Activated CD4-positive, alpha-beta T cell treated with anti-CD3 and anti-CD28 coated beads for 36 hours (primary cell): ENCODE measurements at regions of chr12 and their contacts with region 1.

Region 1: GRCh38 chr12:56117778-56118687 is at the start of gene ZC3H10:
- DNase-seq: peak; percentile 99
- ATAC-seq: peak; percentile 77
- H3K4me3 Mint-ChIP-seq: peak within 1 kb of the TSS; percentile 97
- H3K27ac Mint-ChIP-seq: peak within 1 kb of the TSS; percentile 100
- H3K4me1 Mint-ChIP-seq: peaks cover 24% of the 10 kb centered on the region
- H3K27me3 Mint-ChIP-seq: no peaks in the 10 kb centered on the region
- total RNA-seq, gene ZC3H10: 6.4 to 6.5 TPM

Region 2: DNA sequence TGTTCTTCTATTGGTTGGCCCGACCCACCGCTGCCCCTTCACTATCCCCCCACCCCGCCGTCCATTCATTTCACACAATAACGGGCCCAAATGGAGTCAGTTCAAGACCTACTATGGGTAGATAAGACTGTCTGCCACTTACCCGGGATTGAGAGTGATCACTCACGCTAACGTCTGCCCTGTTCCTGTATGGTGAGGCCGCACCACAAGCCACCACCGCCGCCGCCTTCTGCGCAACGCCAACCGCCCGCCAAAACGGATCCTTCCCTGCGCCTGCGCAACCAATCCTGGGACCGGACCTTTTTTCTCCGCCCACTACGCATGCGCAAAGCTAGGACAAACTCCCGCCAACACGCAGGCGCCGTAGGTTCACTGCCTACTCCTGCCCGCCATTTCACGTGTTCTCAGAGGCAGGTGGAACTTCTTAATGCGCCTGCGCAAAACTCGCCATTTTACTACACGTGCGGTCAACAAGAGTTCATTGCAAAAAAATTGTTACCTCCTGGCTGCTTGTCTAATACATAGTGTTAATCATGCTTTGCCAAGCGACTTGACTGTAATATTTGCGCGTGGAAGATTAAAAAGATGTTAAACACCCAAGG is 1838.1 kb before region 1 on chr12 and contains the start of gene CBX5:
- CTCF ChIA-PET with region 1: no interaction called
- POLR2A ChIA-PET with region 1: no interaction called
- intact Hi-C with region 1: loop called in 1 of 2 experiments (anchors 10 kb)
- DNase-seq: peak; percentile 100
- ATAC-seq: peak; percentile 50
- H3K4me3 Mint-ChIP-seq: no peak within 1 kb of the TSS
- H3K27ac Mint-ChIP-seq: no peak within 1 kb of the TSS
- H3K4me1 Mint-ChIP-seq: peaks cover 52% of the 10 kb centered on the region
- H3K27me3 Mint-ChIP-seq: no peaks in the 10 kb centered on the region
- total RNA-seq, gene CBX5: 140 to 146 TPM

Region 3: GRCh38 chr12:55926738-55927587 is 191.1 kb before region 1 on chr12:
- CTCF ChIA-PET with region 1: no interaction called
- POLR2A ChIA-PET with region 1: interaction called, 11 read pairs
- intact Hi-C with region 1: loop called (anchors 1 to 2 kb)
- DNase-seq: peak; percentile 97
- ATAC-seq: peak; percentile 40
- H3K4me3 Mint-ChIP-seq: peak overlapping the region; percentile 100
- H3K27ac Mint-ChIP-seq: peak overlapping the region; percentile 95
- H3K4me1 Mint-ChIP-seq: peaks cover 48% of the 10 kb centered on the region
- H3K27me3 Mint-ChIP-seq: no peaks in the 10 kb centered on the region

Region 4: GRCh38 chr12:56127888-56128669 is 10.0 kb after region 1 on chr12 and contains the start of gene ESYT1:
- CTCF ChIA-PET with region 1: interaction called, 41 read pairs
- POLR2A ChIA-PET with region 1: interaction called, 48 read pairs
- intact Hi-C with region 1: loop called (anchors 1 kb)
- DNase-seq: peak; percentile 98
- ATAC-seq: peak; percentile 96
- H3K4me3 Mint-ChIP-seq: peak within 1 kb of the TSS; percentile 93
- H3K27ac Mint-ChIP-seq: peak within 1 kb of the TSS; percentile 95
- H3K4me1 Mint-ChIP-seq: peaks cover 55% of the 10 kb centered on the region
- H3K27me3 Mint-ChIP-seq: no peaks in the 10 kb centered on the region
- total RNA-seq, gene ESYT1: 132 to 160 TPM

Region 5: GRCh38 chr12:56258057-56258819 is 140.2 kb after region 1 on chr12 and contains the start of gene ANKRD52:
- CTCF ChIA-PET with region 1: interaction called, 6 read pairs
- POLR2A ChIA-PET with region 1: no interaction called
- intact Hi-C with region 1: loop called in 1 of 2 experiments (anchors 1 kb)
- DNase-seq: peak; percentile 90
- ATAC-seq: peak; percentile 92
- H3K4me3 Mint-ChIP-seq: peak within 1 kb of the TSS; percentile 83
- H3K27ac Mint-ChIP-seq: peak within 1 kb of the TSS; percentile 72
- H3K4me1 Mint-ChIP-seq: peaks cover 16% of the 10 kb centered on the region
- H3K27me3 Mint-ChIP-seq: no peaks in the 10 kb centered on the region
- total RNA-seq, gene ANKRD52: 29.2 to 31.0 TPM

Region 6: GRCh38 chr12:56448860-56449621 is 331.0 kb after region 1 on chr12 and contains the start of gene TIMELESS:
- CTCF ChIA-PET with region 1: no interaction called
- POLR2A ChIA-PET with region 1: no interaction called
- intact Hi-C with region 1: loop called in 1 of 2 experiments (anchors 1 kb)
- DNase-seq: peak; percentile 92
- ATAC-seq: peak; percentile 97
- H3K4me3 Mint-ChIP-seq: peak within 1 kb of the TSS; percentile 81
- H3K27ac Mint-ChIP-seq: peak within 1 kb of the TSS; percentile 97
- H3K4me1 Mint-ChIP-seq: peaks cover 19% of the 10 kb centered on the region
- H3K27me3 Mint-ChIP-seq: no peaks in the 10 kb centered on the region
- total RNA-seq, gene TIMELESS: 46.3 to 47.3 TPM

Region 7: DNA sequence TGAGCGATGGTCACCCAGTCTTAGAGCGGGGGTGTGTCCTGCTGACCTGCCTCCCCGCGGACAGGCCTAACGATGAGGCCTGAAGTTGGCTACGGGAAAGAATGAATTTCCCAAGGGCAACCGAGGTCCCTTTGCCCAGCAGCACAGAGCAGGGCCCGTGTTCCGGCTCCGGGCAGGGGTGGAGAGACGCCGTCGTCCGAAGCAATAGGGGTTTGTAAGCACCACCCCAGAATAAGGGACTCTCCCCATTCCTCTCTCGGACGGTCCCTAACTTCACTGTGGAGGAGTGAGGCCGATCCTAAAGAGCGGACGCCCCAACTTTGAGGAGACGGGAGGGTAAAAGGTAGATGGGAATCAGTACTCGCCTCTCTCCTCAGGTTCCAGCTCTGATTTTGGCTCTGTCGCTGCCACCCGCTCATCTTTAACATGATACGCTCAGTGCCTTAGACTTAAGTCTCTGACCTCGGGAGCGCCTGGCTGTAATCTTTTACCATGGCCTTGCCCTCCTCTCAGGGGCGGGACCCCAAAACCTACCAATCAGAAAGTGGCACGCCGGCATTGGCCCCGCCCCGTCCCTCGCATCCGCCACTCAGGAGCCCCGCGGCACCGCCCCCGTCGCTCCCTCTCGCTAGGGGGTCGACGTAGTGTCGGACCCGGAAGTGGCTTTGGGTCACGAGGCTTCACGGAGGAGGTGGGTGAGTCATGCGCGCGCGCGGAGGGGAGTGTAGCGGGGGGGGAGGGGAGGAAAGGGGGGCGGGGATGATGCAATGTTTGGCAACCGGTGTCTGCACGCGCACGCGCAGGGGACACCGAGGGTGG is 1402.2 kb after region 1 on chr12 and contains the start of gene DDIT3:
- CTCF ChIA-PET with region 1: no interaction called
- POLR2A ChIA-PET with region 1: no interaction called
- intact Hi-C with region 1: loop called in 1 of 2 experiments (anchors 5 kb)
- DNase-seq: peak; percentile 100
- ATAC-seq: peak; percentile 76
- H3K4me3 Mint-ChIP-seq: peak within 1 kb of the TSS; percentile 96
- H3K27ac Mint-ChIP-seq: peak within 1 kb of the TSS; percentile 99
- H3K4me1 Mint-ChIP-seq: peaks cover 53% of the 10 kb centered on the region
- H3K27me3 Mint-ChIP-seq: no peaks in the 10 kb centered on the region
- total RNA-seq, gene DDIT3: 31.2 to 32.2 TPM